Breast epithelium (tissue), 4 donors: ENCODE measurements at regions of chr11 and their contacts with region 1.

Region 1: GRCh38 chr11:108985945-108986279 is 321.0 kb downstream of the DDX10 start:
- DNase-seq: no peak
- H3K4me3 ChIP-seq: no peak overlapping the region
- H3K27ac ChIP-seq: no peak overlapping the region
- H3K4me1 ChIP-seq: no peaks in the 10 kb centered on the region
- H3K27me3 ChIP-seq: no peaks in the 10 kb centered on the region
- CTCF ChIP-seq: no peak
- POLR2A ChIP-seq: no peak

Region 2: DNA sequence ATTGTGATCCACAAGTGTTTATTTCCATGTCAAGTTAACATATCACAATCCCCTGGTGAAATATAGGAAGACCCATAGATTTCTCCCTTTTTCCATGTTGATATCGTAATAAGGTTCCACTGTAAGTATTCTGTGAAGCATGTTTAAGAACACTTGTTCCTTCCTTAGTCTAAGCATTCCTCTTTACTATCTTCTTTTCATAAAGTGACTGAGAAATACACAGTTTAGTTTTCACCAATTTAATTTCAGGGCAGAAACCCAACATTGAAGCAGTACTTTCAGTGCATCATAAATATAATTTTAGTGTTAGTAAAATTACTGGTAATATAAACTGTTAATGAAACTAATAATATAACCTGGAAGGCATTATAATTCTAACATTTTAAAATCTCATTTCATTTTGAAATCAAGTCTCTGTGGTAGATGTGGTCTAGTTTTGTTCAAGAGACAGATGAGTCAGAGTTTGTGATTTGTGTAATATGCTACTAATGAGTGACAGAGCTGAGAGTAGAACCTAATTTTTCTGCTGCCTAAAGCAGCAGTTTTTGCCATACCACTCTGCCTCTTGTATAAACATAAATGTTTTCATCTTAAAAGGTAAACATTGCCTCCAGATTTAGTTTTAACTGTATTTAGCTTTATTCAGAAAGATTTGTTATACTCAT is 683.7 kb before region 1 on chr11:
- intact Hi-C with region 1: loop called (anchors 10 kb)
- DNase-seq: no peak
- H3K4me3 ChIP-seq: no peak overlapping the region
- H3K27ac ChIP-seq: no peak overlapping the region
- H3K4me1 ChIP-seq: no peaks in the 10 kb centered on the region
- H3K27me3 ChIP-seq: no peaks in the 10 kb centered on the region
- CTCF ChIP-seq: no peak
- POLR2A ChIP-seq: no peak

Region 3: DNA sequence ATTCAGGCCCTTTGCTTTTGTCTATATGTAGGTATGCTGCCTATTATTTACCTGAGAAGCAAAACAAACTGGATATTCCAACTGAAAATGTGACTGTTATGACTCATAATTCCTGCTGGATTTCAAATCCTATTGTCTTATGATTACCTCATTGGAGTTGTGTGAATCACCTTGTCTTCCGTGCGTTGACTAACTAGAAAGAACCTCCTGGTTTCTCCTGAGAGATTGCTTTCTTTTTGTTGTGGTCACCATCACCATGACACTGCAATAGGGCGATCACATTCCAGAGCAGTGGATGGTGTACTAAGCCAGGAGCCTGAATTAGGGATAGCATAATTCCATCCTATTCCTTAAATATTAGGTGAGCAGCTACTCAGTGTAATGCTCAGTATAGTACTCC is 369.3 kb before region 1 on chr11:
- intact Hi-C with region 1: loop called (anchors 5 kb)
- DNase-seq: no peak
- H3K4me3 ChIP-seq: no peak overlapping the region
- H3K27ac ChIP-seq: peak overlapping the region in 1 of 2 donors; percentile 27
- H3K4me1 ChIP-seq: no peaks in the 10 kb centered on the region
- H3K27me3 ChIP-seq: no peaks in the 10 kb centered on the region
- CTCF ChIP-seq: no peak
- POLR2A ChIP-seq: no peak

Region 4: DNA sequence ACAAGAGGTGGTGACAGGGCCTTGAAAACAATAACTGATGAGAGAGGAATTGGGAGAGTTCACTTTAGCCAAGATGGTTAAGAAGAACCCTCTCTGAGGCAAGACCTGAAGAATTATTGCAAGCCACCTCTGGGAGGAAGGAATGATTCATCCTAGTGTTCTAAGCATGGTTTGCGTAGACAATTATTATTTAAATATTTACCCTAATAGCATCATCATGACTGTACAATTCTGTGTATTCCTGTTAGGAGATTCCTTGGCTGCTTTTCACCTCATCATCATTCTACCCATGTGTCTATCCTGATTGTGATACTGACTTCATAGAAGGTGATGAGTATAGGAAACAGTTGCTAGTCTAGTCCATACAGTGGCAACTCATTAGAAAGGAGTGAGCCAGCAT is 56.7 kb before region 1 on chr11:
- intact Hi-C with region 1: no loop called
- DNase-seq: no peak
- H3K4me3 ChIP-seq: no peak overlapping the region
- H3K27ac ChIP-seq: no peak overlapping the region
- H3K4me1 ChIP-seq: no peaks in the 10 kb centered on the region
- H3K27me3 ChIP-seq: no peaks in the 10 kb centered on the region
- CTCF ChIP-seq: no peak
- POLR2A ChIP-seq: no peak

Region 5: DNA sequence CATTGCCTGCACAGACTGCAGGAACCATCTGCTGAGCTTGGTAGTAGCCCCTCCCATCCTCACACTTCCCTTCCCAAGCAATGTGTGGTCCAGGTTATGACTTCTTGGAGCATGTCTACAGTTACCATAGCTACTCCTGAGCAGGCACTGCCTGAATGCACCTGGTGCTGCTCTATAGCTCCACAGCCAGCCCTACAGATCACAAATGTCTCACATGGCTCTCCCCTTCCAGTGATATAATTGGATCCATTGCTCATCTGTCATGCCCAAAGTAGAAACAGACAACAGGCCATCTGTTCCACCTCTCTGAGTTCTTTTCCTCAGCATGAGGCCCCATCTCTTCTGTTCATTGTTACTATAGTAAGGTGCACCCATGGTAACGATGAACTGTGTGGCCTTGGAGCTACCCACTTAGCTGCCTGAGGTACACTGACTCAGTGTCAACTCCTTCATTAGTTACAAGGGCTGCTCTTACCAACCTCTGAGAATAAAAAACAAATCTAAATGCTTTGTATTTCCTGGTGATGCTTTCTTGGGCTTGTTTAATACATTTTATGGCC is 787.0 kb after region 1 on chr11:
- intact Hi-C with region 1: loop called (anchors 5 kb)
- DNase-seq: no peak
- H3K4me3 ChIP-seq: no peak overlapping the region
- H3K27ac ChIP-seq: no peak overlapping the region
- H3K4me1 ChIP-seq: no peaks in the 10 kb centered on the region
- H3K27me3 ChIP-seq: no peaks in the 10 kb centered on the region
- CTCF ChIP-seq: no peak
- POLR2A ChIP-seq: no peak